ENCODE measurements at regions of chr2 and their contacts with region 1.

Region 1: DNA sequence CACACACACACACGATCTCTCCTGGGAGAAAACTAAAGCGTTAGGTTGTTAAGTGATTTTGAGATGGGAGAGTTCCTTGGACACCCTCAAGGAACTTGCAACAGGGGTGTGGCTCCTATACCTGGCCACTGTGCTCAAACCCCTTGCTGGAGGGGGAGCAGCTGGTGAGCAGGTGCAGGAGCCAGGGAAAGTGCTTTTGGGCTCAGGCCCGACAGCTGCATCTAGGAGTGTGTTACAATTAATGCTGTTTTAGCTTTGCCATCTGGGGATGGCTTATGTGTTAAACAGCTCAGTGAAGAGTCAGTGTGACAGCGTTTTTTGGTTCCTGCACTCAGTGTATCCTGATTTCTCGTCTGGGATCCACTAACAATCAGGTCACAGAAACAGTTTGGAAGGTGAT is 510.8 kb downstream of the TRIB2 start:
- DNase-seq: no peak
- H3K4me3 ChIP-seq: no peak overlapping the region
- H3K27ac ChIP-seq: no peak overlapping the region
- H3K4me1 ChIP-seq: no peaks in the 10 kb centered on the region
- H3K27me3 ChIP-seq: no peaks in the 10 kb centered on the region
- CTCF ChIP-seq: no peak
- POLR2A ChIP-seq: no peak

Region 2: DNA sequence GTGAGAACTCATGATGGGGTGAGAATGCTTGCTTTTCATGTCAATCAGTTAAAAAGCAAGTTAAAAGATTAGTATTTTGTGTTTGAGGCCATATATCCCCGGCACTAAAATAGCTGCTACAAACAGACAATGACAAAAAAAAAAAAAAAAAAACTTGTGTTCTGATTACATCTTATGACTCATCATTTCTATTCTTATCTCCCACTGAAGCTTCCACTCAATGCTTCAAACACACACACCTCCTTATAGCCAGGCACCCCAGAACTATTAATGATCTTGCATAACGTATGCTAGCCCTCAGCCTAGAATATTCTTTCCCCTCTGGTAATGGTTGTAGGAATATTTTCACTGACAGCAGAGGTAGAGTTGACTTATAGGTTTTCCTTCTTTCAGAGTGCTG is 267.5 kb after region 1 on chr2:
- intact Hi-C with region 1: loop called (anchors 5 kb)
- DNase-seq: no peak
- H3K4me3 ChIP-seq: no peak overlapping the region
- H3K27ac ChIP-seq: no peak overlapping the region
- H3K4me1 ChIP-seq: no peaks in the 10 kb centered on the region
- H3K27me3 ChIP-seq: no peaks in the 10 kb centered on the region
- CTCF ChIP-seq: no peak
- POLR2A ChIP-seq: no peak

Region 3: DNA sequence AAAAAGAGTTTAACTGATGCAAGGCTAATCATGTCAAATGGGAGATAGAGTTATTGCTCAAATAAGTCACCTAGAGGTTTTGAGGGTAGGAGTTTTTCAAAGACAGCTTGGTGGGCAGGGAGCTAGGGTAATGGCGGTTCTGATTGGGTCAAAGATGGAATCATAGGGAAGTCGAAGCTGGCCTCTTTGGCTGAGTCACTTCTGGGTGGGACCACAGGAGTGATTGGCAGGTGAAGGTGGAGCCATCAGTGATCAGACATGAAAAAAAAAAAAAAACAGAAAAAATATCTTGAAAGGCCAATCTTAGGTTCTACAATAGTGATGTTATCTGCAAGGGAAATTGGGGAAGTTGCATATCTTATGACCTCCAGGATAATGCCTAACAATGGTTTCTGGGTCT is 504.8 kb after region 1 on chr2:
- intact Hi-C with region 1: no loop called
- DNase-seq: no peak
- H3K4me3 ChIP-seq: no peak overlapping the region
- H3K27ac ChIP-seq: no peak overlapping the region
- H3K4me1 ChIP-seq: no peaks in the 10 kb centered on the region
- H3K27me3 ChIP-seq: no peaks in the 10 kb centered on the region
- CTCF ChIP-seq: no peak
- POLR2A ChIP-seq: no peak

Measured in breast epithelium (tissue), 4 donors.